ENCODE measurements at regions of chr3 and their contacts with region 1.

Region 1: GRCh38 chr3:3200632-3201212 is 21.2 kb upstream of the CRBN start:
- DNase-seq: peak; percentile 68
- H3K4me3 ChIP-seq: no peak overlapping the region
- H3K27ac ChIP-seq: no peak overlapping the region
- H3K4me1 ChIP-seq: no peaks in the 10 kb centered on the region
- H3K27me3 ChIP-seq: peaks cover 14% of the 10 kb centered on the region
- CTCF ChIP-seq: peak; percentile 83

Region 2: GRCh38 chr3:3998140-3998922 is 797.6 kb after region 1 on chr3:
- CTCF ChIA-PET with region 1: no interaction called
- POLR2A ChIA-PET with region 1: no interaction called
- intact Hi-C with region 1: loop called (anchors 5 kb)
- DNase-seq: peak; percentile 45
- H3K4me3 ChIP-seq: no peak overlapping the region
- H3K27ac ChIP-seq: no peak overlapping the region
- H3K4me1 ChIP-seq: no peaks in the 10 kb centered on the region
- H3K27me3 ChIP-seq: no peaks in the 10 kb centered on the region
- CTCF ChIP-seq: peak; percentile 58

Region 3: GRCh38 chr3:4271834-4272233 is 1071.1 kb after region 1 on chr3:
- CTCF ChIA-PET with region 1: interaction called, 12 read pairs
- POLR2A ChIA-PET with region 1: no interaction called
- intact Hi-C with region 1: loop called (anchors 2 kb)
- DNase-seq: peak; percentile 56
- H3K4me3 ChIP-seq: no peak overlapping the region
- H3K27ac ChIP-seq: no peak overlapping the region
- H3K4me1 ChIP-seq: no peaks in the 10 kb centered on the region
- H3K27me3 ChIP-seq: peaks cover 27% of the 10 kb centered on the region
- CTCF ChIP-seq: peak; percentile 62

Region 4: GRCh38 chr3:4290272-4290893 is 1089.7 kb after region 1 on chr3:
- CTCF ChIA-PET with region 1: interaction called, 6 read pairs
- POLR2A ChIA-PET with region 1: no interaction called
- intact Hi-C with region 1: loop called (anchors 1 kb)
- DNase-seq: peak; percentile 55
- H3K4me3 ChIP-seq: no peak overlapping the region
- H3K27ac ChIP-seq: no peak overlapping the region
- H3K4me1 ChIP-seq: no peaks in the 10 kb centered on the region
- H3K27me3 ChIP-seq: peaks cover 8% of the 10 kb centered on the region
- CTCF ChIP-seq: peak; percentile 88

Region 5: DNA sequence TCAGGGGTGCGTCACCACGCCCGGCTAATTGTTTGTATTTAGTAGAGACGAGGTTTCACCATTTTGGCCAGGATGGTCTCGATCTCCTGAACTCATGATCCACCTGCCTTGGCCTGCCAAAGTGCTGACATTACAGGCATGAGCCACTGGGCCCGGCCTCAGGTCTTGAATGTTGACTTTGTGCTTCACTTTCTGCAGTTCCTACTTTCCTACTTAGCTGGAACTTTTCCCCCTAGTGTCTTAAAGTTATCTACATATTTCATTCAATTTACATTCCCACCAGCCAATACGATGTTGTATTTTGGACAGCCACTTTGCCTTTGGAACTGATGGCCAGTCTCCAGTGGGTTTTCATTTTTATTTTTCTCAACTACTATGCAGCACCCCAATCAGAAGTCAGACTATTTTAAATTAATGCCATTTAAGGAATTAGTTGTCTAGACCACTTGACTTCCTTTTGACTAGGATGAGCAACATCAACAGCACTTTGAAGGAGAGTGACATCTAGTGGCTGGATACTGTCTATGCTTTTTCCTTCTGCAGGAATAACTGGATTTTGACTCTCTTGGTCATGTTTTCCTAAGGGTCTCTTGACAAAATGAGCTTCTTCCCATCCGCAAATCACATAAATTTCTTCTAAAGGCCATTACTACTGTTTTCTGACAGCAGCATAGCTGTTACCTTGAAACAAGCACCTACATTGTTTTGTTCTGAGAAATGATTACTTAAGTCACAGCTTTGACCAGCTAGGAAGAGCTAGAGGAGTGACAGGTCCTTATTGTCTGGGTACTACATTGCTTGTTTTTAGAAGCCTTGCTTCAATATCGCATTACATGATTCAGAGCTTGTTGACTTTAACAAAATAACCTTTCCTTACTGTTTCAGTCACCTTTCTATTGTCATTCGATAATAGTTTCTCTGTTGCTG is 1432.6 kb after region 1 on chr3:
- CTCF ChIA-PET with region 1: no interaction called
- POLR2A ChIA-PET with region 1: no interaction called
- intact Hi-C with region 1: loop called (anchors 5 kb)
- DNase-seq: peak; percentile 67
- H3K4me3 ChIP-seq: no peak overlapping the region
- H3K27ac ChIP-seq: no peak overlapping the region
- H3K4me1 ChIP-seq: no peaks in the 10 kb centered on the region
- H3K27me3 ChIP-seq: peaks cover 3% of the 10 kb centered on the region
- CTCF ChIP-seq: peak; percentile 89

Measured in A673 (cell line).